ENCODE measurements at regions of chr15 and their contacts with region 1.

Region 1: DNA sequence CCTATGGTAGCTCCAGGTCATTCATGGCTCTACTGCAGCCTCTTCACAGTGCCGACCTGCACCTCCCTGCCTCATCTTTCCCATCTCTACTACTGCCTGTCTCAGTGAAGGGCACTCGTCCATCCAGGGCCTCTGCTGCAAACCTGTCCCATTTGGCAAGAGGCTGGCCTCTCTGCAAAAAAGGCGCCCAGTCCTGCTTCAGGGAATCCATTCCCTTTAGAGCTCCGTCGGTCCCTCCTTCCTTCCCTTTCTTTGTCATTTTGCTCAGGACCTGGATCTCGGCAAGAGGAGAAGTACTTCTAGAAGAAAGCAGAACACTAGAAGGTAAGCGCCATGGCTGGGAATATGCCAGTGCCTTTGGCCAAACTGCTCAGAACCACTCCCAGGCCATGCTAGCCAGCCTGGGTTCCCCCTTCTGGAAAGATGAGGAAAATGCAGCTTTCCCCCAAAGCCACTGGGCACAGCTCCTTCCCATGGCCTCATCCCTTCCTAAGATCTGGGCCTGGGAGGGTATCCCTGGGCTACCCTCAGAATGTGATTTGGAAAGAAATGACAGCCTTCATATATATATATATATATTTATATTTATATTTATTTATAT is 6.4 kb upstream of the ISL2 start:
- DNase-seq: peak in 2 of 3 donors; percentile 46 to 55
- H3K4me3 ChIP-seq: no peak overlapping the region
- H3K27ac ChIP-seq: no peak overlapping the region
- H3K4me1 ChIP-seq: peaks cover 0 to 2% (median 2%) of the 10 kb centered on the region in 4 experiments
- H3K27me3 ChIP-seq: peaks cover 9 to 48% (median 26%) of the 10 kb centered on the region in 5 experiments

Region 2: DNA sequence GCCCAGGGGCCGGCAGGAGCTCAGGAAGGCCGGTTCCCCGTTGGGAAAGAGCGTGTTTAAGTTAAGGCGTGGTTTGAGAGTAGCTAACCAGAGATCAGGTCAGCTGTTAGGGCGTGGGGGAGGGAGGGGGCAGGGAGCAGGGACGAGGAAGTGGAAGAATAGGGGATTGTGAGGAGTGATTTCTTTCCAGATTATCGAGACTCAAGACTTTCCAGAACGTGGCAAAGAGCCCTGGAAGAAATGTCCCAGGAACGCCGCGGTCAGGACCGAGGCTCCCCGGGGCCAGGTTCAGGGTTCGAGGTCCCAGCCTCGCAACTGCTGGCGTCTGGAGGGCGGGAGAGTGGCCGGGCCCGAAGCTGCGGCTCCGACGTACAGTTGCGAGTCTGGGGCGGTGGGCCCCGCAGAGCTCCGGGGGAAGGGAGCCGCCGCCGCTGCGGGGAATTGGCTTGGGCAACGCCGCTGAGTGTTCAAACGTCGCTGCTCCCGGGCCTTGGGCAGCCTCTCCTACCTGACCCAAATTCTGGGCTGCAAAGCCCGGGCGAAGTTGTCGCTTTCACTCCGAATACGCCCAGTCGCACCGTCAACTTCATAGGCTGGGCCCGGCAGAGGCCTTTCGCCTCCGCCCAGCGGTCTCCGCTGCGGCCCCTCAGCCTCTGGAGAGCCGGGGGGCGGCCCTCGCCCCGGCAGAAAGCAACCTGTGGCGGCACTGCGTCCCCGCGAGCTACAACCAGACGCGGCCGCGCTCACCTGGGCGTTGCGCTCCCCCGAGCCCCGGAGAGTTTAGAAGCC is 15.9 kb after region 1 on chr15:
- CTCF ChIA-PET with region 1: interaction called, 28 read pairs
- POLR2A ChIA-PET with region 1: no interaction called
- DNase-seq: peak in 2 of 3 donors; percentile 22 to 44
- H3K4me3 ChIP-seq: peak overlapping the region in 6 of 7 experiments; percentile 30 to 64 (median 46)
- H3K27ac ChIP-seq: no peak overlapping the region
- H3K4me1 ChIP-seq: peaks cover 0 to 39% (median 35%) of the 10 kb centered on the region in 4 experiments
- H3K27me3 ChIP-seq: peaks cover 30 to 91% (median 50%) of the 10 kb centered on the region in 5 experiments

Measured in common myeloid progenitor, CD34-positive (primary cell).